ENCODE measurements at regions of chr11 and their contacts with region 1.

Region 1: DNA sequence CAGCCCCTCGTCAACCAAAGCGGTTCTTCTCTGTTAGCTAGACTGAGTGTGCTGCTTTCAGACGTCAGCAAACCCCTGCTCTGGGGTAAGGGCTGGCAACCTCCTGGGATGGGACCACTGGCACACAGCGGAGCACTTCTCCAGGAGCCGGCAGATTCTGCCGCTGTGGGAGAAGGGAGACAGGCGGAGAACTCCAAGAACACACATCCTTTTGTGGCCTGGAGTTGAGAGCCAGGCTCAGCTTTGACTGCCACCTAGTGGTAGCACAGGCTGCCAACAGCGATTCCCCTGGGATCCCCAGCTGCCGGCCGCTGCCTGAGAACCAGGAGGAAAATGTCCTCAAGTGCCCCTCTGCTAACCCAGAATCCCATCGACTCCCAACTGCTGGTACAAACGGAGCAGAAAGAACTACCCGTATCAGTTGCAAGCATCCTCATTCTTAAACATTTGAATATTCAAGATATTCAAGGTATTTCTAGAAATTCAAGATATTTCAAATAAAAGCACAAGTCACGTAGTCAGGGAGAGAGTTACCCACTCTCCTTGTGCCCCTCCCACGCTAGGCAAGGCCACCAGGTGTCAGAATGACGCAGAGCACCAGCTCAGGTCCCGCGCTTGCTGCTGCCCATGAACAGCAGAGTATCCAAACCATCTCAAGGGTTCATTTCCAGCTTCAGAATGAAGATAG is 4.9 kb downstream of the LTO1 start:
- DNase-seq: peak; percentile 56
- ATAC-seq: peak; percentile 79
- H3K4me3 ChIP-seq: no peak overlapping the region
- H3K27ac ChIP-seq: peak overlapping the region; percentile 27; the same call in 1 of the 2 replicates
- H3K4me1 ChIP-seq: peaks cover 6 to 24% of the 10 kb centered on the region in 2 experiments; a peak in 3 of 4 replicates
- H3K27me3 ChIP-seq: no peaks in the 10 kb centered on the region
- CTCF ChIP-seq: peak; percentile 83 to 95 (median 91)
- POLR2A ChIP-seq: no peak
- RAD21 ChIP-seq: peak; percentile 91

Region 2: DNA sequence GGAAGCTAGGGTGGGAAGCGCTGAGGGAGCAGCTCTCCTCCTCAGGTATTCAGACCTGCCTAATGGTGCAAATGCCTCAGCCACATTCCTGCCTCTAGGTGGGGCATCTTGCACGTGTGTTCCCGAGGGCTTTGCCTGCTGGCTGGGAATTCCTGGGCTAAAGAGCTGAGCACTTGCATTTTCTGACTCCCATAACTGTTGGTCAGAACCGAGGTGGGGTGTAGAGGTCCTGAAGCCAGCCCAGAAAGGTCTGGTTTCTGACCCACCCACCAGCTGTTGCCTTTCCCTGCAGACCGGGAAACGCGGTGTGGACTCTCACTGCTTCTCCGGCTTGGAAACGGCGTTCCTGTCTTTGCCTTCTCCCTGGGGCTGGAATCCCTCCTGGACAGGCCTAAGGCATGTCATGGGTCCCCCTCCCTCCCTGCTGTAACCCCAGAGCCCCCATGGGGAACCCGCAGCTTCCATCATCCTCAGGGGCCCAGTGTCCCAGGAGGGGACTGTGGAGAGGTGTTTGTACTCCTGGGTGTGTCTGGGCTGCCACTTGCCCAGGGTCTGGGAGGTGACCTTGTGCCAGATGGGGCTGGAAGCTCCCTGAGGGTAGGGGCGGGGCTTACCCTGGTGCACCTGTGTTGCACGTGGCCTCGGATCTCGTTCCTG is 538.5 kb before region 1 on chr11:
- CTCF ChIA-PET with region 1: interaction called, 10 read pairs
- POLR2A ChIA-PET with region 1: no interaction called
- RAD21 ChIA-PET with region 1: interaction called in 1 of 2 experiments, 3 read pairs
- intact Hi-C with region 1: no loop called
- DNase-seq: peak; percentile 66
- ATAC-seq: peak; percentile 94
- H3K4me3 ChIP-seq: no peak overlapping the region
- H3K27ac ChIP-seq: peak overlapping the region; percentile 50
- H3K4me1 ChIP-seq: peaks cover 14 to 23% of the 10 kb centered on the region in 2 experiments
- H3K27me3 ChIP-seq: no peaks in the 10 kb centered on the region
- CTCF ChIP-seq: peak; percentile 81 to 94 (median 88); a peak in 5 of 6 replicates
- POLR2A ChIP-seq: no peak
- RAD21 ChIP-seq: peak; percentile 97

Region 3: DNA sequence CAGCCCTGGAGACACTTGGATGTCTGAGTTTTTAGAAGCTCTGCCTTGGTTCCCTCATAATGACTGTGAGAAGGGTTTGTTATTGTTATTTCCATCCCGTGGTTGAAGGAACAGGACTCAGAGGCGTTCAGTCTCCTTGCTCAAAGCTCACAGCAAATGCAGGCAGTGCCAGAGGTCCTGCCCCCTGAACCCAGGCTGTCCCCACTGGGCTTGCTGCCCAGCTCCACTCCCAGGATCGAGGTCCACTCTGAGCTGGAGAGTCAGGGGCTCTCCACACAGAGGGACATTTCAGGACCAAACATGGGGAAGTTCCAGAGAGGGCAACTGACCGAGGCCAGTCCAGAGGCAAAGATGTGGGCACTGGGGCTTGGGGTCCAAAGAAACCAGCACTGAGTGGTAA is 90.0 kb after region 1 on chr11:
- CTCF ChIA-PET with region 1: no interaction called
- POLR2A ChIA-PET with region 1: no interaction called
- RAD21 ChIA-PET with region 1: no interaction called
- intact Hi-C with region 1: no loop called
- DNase-seq: no peak
- ATAC-seq: no peak
- H3K4me3 ChIP-seq: no peak overlapping the region
- H3K27ac ChIP-seq: no peak overlapping the region
- H3K4me1 ChIP-seq: no peaks in the 10 kb centered on the region
- H3K27me3 ChIP-seq: no peaks in the 10 kb centered on the region
- CTCF ChIP-seq: no peak
- POLR2A ChIP-seq: no peak
- RAD21 ChIP-seq: no peak

Measured in HCT116 (cell line).